Mammary epithelial cell (primary cell): ENCODE measurements at regions of chr11 and their contacts with region 1.

Region 1: GRCh38 chr11:65941720-65942310 is 3.5 kb upstream of the TSGA10IP start:
- DNase-seq: no peak
- H3K4me3 ChIP-seq: no peak overlapping the region
- H3K27ac ChIP-seq: no peak overlapping the region
- H3K4me1 ChIP-seq: peaks cover 12% of the 10 kb centered on the region
- H3K27me3 ChIP-seq: no peaks in the 10 kb centered on the region
- CTCF ChIP-seq: no peak

Region 2: DNA sequence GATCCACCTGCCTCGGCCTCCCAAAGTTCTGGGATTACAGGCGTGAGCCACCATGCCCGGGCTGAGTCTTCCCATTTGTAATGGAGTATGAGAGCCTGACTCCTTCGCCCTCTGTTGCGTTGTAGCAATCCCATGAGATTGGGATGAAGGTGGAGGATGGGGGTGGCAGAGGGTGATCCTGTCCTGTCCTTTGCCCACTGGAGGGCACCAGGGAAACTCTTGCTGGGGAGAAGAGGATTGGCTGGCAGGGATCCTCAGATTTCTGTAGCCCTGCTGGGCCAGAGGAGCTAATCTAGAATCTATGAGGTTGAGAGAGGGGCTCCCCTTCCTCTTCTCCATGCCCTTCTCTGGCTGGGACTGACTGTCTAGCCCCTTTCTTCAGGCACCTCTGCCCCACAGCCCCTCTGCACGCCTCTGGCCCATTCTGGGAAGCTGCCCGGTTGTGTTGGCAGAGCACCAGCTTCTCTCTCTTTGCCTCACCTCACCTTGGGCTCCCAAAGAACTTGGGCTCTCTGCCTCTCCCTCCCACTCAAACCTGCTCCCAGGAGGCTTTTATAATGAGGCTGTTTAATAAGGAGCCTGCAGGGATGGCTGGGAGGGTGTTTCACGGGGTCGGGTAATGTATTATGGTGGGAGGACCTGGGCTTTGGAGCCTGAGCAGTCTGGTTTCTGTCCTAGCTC is 94.0 kb after region 1 on chr11:
- CTCF ChIA-PET with region 1: no interaction called
- dilution Hi-C with region 1: loop called (anchors 5 kb)
- in situ Hi-C with region 1: no loop called
- intact Hi-C with region 1: no loop called
- DNase-seq: no peak
- H3K4me3 ChIP-seq: no peak overlapping the region
- H3K27ac ChIP-seq: no peak overlapping the region
- H3K4me1 ChIP-seq: no peaks in the 10 kb centered on the region
- H3K27me3 ChIP-seq: no peaks in the 10 kb centered on the region
- CTCF ChIP-seq: no peak